Right ventricle myocardium inferior (tissue), 1 donor: ENCODE measurements at regions of chr4 and their contacts with region 1.

Region 1: DNA sequence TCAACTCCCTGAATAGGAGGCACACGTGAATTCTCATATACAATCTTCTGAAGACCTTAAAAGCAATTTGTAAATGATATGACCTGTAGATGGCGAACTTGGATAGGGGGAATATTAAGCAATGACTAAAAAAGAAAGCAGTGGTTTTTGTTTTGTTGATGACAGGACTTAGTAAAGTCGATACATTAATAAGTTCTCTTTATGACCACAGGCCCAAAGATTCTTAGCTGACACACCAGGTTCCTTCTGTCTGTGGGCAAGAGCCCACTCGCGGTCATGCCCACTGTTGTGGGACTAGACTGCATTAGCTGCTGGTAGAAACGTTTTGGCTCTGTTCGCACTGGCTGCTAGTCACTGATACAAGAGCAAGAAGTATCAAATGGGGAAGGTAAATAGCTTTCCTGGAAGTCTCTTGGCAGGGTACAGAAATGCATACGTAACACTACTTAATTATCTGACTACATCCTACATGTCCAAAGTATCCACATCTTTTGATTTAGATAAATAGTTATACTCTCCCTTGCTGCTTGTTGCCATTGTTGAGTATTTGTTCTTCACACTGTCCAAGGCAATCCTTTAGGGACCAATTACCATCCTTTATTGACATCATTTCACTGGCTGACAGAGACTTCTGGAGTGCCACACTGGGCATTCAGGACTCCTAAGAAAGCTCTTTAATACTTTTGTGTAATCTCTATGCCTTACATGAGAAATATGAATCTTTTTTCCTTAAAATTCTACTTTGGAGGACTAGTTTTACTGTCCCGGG is 31.0 kb downstream of the ALPK1 start:
- DNase-seq: no peak
- ATAC-seq: no peak

Region 2: GRCh38 chr4:112523764-112524505 is 195.8 kb after region 1 on chr4:
- intact Hi-C with region 1: loop called (anchors 1 kb)
- DNase-seq: peak; percentile 83
- ATAC-seq: peak; percentile 75

Region 3: DNA sequence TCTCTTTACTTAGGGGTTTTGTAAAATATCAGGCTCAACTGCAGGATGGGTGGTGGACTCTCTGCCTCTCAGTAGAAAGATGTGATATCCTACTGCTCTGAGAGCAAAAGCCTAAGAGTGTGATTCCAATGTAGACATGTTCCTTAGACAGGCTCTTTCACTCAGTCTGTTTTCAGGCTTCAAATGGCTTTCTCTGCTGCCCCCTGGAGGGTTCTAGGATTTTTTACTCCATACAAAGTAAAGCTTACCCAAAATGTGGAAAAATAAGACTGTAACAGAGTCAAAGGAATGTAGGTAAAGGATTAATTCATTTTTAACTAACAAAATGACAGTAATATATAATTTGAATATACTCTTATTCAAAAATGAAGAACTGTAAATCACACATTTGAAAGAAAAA is 276.4 kb after region 1 on chr4:
- intact Hi-C with region 1: loop called (anchors 1 kb)
- DNase-seq: no peak
- ATAC-seq: peak; percentile 77